ENCODE measurements at regions of chr6 and their contacts with region 1.

Region 1: DNA sequence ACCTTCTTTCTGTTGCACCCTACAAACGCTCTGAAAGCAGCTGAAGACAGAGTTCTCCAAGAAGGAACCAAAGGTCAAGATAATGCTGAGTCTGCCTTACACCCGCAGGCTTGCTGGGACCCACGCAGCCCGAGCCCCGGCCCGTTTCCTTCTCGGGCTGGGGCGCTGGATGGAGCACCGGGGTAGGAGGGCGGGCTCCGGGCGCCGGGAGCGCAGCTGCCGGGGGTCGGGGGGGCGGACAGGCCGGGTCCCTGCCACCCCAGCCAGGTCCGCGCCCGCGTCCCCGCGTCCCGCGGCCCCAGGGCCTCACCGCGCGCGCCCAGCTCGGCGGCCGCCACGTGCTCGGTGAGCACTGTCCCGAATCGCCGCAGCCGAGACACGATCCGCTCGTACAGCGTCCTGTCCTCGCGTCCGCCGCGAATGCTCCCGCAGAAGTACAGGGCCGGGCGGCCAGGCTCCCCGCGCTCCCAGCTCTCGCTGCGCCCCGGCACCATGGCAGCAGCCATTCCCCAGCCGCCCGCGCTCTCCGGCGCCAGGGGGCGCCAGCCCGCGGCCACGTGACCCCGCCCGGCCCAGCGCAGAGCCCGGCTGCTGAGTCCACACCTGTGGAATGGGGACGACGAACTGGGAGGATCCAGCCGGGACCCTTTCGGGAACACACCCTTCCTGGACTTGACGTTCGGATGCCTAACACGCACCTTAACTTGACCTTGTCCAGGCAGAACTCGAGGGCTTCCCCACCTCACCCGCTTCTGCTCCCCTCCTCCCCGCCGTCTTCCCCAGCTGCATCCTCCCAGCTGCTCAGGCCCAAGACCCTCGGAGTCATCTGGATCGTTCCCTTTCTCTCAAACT is at the start of gene DNPH1:
- DNase-seq: peak; percentile 68 to 83 (median 75)
- H3K4me3 ChIP-seq: peak within 1 kb of the TSS; percentile 62
- H3K4me3 Mint-ChIP-seq: peak within 1 kb of the TSS; percentile 85 to 93 (median 90)
- H3K27ac ChIP-seq: peak within 1 kb of the TSS; percentile 53
- H3K27ac Mint-ChIP-seq: peak within 1 kb of the TSS; percentile 85 to 97 (median 94)
- H3K4me1 ChIP-seq: peaks cover 30% of the 10 kb centered on the region
- H3K4me1 Mint-ChIP-seq: peaks cover 24 to 44% (median 39%) of the 10 kb centered on the region in 3 donors
- H3K27me3 ChIP-seq: no peaks in the 10 kb centered on the region
- H3K27me3 Mint-ChIP-seq: peaks cover 3 to 12% of the 10 kb centered on the region in 2 donors
- total RNA-seq, gene DNPH1: 68.2 to 68.3 TPM

Region 2: GRCh38 chr6:43130429-43130828 is 98.7 kb before region 1 on chr6:
- CTCF ChIA-PET with region 1: no interaction called
- POLR2A ChIA-PET with region 1: no interaction called
- DNase-seq: no peak
- H3K4me3 ChIP-seq: no peak overlapping the region
- H3K4me3 Mint-ChIP-seq: no peak overlapping the region
- H3K27ac ChIP-seq: no peak overlapping the region
- H3K27ac Mint-ChIP-seq: no peak overlapping the region
- H3K4me1 ChIP-seq: no peaks in the 10 kb centered on the region
- H3K4me1 Mint-ChIP-seq: no peaks in the 10 kb centered on the region
- H3K27me3 ChIP-seq: no peaks in the 10 kb centered on the region
- H3K27me3 Mint-ChIP-seq: peaks cover 1 to 3% of the 10 kb centered on the region in 2 donors

Region 3: DNA sequence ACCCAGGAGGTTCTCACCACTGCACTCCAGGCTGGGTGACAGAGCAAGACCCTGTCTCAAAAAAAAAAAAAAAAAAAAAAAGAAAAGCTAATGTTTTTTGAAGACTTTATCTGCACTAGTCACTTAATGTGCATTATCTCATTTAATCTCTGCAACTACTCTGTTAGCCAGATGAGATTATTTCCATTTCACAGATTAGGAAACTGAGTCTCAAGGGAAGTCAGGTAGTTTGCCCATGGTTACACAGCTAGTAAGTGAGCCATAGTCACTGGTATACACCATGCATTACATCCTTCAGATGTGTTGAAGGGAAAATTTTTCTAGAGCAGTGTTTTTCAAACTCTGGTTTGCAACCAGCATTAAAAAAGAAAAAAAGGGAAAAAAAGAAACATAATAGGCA is 65.3 kb before region 1 on chr6:
- CTCF ChIA-PET with region 1: no interaction called
- POLR2A ChIA-PET with region 1: no interaction called
- DNase-seq: no peak
- H3K4me3 ChIP-seq: no peak overlapping the region
- H3K4me3 Mint-ChIP-seq: no peak overlapping the region
- H3K27ac ChIP-seq: no peak overlapping the region
- H3K27ac Mint-ChIP-seq: no peak overlapping the region
- H3K4me1 ChIP-seq: no peaks in the 10 kb centered on the region
- H3K4me1 Mint-ChIP-seq: no peaks in the 10 kb centered on the region
- H3K27me3 ChIP-seq: no peaks in the 10 kb centered on the region
- H3K27me3 Mint-ChIP-seq: peaks cover 0 to 2% of the 10 kb centered on the region in 2 donors

Region 4: GRCh38 chr6:43174263-43175112 is 54.7 kb before region 1 on chr6:
- CTCF ChIA-PET with region 1: interaction called, 22 read pairs
- POLR2A ChIA-PET with region 1: interaction called, 6 read pairs
- DNase-seq: peak; percentile 89 to 97 (median 91)
- H3K4me3 ChIP-seq: peak overlapping the region; percentile 61
- H3K4me3 Mint-ChIP-seq: peak overlapping the region; percentile 92 to 98 (median 93)
- H3K27ac ChIP-seq: peak overlapping the region; percentile 64
- H3K27ac Mint-ChIP-seq: peak overlapping the region; percentile 91 to 98 (median 96)
- H3K4me1 ChIP-seq: peaks cover 39% of the 10 kb centered on the region
- H3K4me1 Mint-ChIP-seq: peaks cover 41 to 53% (median 44%) of the 10 kb centered on the region in 3 donors
- H3K27me3 ChIP-seq: no peaks in the 10 kb centered on the region
- H3K27me3 Mint-ChIP-seq: no peaks in the 10 kb centered on the region

Region 5: DNA sequence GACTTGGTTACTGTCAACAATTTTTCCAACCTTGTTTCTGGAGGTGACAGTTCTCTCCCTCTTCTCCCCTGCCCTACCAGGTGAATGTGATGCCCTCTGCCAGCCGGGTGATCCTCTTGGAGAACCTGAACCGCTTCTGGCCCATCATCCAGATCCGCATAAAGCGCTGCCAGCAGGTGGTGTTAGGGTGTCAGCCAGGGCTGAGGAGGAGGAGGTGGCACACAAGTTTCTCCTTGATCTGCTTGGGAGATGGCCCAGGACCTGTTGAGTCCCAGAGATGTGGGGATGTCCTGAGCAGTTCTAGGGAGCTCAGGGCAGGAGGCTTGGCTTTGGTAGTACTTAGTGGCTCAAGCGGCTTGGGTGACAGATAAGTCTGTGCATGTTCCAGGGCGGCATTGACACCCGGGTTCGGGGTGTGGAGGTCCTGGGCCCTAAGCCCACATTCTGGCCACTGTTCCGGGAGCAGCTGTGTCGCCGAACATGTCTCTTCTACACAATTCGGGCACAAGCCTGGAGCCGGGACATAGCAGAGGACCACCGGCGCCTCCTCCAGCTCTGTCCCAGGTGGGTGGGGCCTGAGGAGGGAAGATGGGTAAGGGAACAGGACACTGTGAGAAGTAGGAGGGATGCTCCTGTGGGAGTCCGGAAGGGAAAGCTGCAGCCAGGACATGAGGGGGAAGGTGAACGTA is 26.0 kb before region 1 on chr6:
- CTCF ChIA-PET with region 1: interaction called, 15 read pairs
- POLR2A ChIA-PET with region 1: no interaction called
- DNase-seq: no peak
- H3K4me3 ChIP-seq: no peak overlapping the region
- H3K4me3 Mint-ChIP-seq: no peak overlapping the region
- H3K27ac ChIP-seq: no peak overlapping the region
- H3K27ac Mint-ChIP-seq: peak overlapping the region in 1 of 8 donors; percentile 29
- H3K4me1 ChIP-seq: no peaks in the 10 kb centered on the region
- H3K4me1 Mint-ChIP-seq: no peaks in the 10 kb centered on the region
- H3K27me3 ChIP-seq: no peaks in the 10 kb centered on the region
- H3K27me3 Mint-ChIP-seq: no peaks in the 10 kb centered on the region

Region 6: GRCh38 chr6:43240950-43241349 is 11.8 kb after region 1 on chr6:
- CTCF ChIA-PET with region 1: interaction called, 17 read pairs
- POLR2A ChIA-PET with region 1: interaction called, 9 read pairs
- DNase-seq: no peak
- H3K4me3 ChIP-seq: no peak overlapping the region
- H3K4me3 Mint-ChIP-seq: no peak overlapping the region
- H3K27ac ChIP-seq: no peak overlapping the region
- H3K27ac Mint-ChIP-seq: no peak overlapping the region
- H3K4me1 ChIP-seq: no peaks in the 10 kb centered on the region
- H3K4me1 Mint-ChIP-seq: no peaks in the 10 kb centered on the region
- H3K27me3 ChIP-seq: peaks cover 35% of the 10 kb centered on the region
- H3K27me3 Mint-ChIP-seq: peaks cover 20 to 44% of the 10 kb centered on the region in 2 donors

Region 7: GRCh38 chr6:43247113-43247999 is 18.2 kb after region 1 on chr6:
- CTCF ChIA-PET with region 1: interaction called, 12 read pairs
- POLR2A ChIA-PET with region 1: interaction called, 9 read pairs
- DNase-seq: peak; percentile 66 to 85 (median 70)
- H3K4me3 ChIP-seq: peak overlapping the region; percentile 87
- H3K4me3 Mint-ChIP-seq: peak overlapping the region; percentile 86 to 93 (median 89)
- H3K27ac ChIP-seq: peak overlapping the region; percentile 35
- H3K27ac Mint-ChIP-seq: peak overlapping the region; percentile 79 to 95 (median 90)
- H3K4me1 ChIP-seq: peaks cover 12% of the 10 kb centered on the region
- H3K4me1 Mint-ChIP-seq: peaks cover 10 to 19% (median 13%) of the 10 kb centered on the region in 3 donors
- H3K27me3 ChIP-seq: peaks cover 28% of the 10 kb centered on the region
- H3K27me3 Mint-ChIP-seq: peaks cover 10 to 15% of the 10 kb centered on the region in 2 donors

Region 8: DNA sequence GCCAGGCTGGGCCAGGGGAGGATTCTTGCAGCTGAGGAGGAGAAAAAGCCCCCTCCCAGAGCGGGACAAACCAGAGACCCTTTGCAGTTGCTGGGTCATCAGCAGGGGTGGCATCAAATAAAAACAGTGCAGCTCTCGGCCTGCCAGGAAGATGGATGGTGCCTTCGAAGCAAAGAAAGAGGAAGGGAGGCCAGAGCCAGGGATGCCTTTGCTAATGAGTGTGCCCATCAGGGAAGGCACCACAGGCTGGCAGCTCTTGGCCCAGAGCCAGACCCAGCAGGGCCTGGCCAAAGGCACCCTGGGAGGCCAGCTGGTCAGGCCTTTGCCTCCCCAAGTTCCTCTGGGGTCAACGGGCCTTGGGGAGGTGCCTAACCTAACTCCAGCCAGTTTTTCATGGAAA is 166.6 kb after region 1 on chr6:
- CTCF ChIA-PET with region 1: interaction called, 26 read pairs
- POLR2A ChIA-PET with region 1: interaction called, 7 read pairs
- DNase-seq: no peak
- H3K4me3 ChIP-seq: no peak overlapping the region
- H3K4me3 Mint-ChIP-seq: no peak overlapping the region
- H3K27ac ChIP-seq: no peak overlapping the region
- H3K27ac Mint-ChIP-seq: peak overlapping the region in 1 of 8 donors; percentile 53
- H3K4me1 ChIP-seq: peaks cover 19% of the 10 kb centered on the region
- H3K4me1 Mint-ChIP-seq: peaks cover 27 to 30% (median 29%) of the 10 kb centered on the region in 3 donors
- H3K27me3 ChIP-seq: no peaks in the 10 kb centered on the region
- H3K27me3 Mint-ChIP-seq: peaks cover 0 to 10% of the 10 kb centered on the region in 2 donors

Region 9: DNA sequence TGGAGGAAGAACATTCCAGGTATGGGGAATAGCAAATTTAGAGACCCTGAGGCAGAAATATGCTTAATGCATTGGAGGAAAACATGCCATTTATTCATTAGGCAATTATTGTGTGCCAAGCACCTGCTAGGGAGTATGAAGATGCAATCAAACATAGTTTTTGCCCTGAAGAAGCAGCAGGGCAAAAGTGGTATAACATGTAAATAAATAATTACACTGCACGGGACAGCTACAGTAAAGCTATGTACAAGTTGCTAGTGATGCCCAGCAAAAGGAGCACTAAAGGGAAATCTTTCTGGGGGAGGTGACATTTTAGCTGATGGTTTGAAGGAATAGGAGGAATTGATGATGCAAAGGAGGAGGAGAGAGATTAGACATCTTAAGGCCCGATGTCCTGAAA is 247.6 kb after region 1 on chr6:
- CTCF ChIA-PET with region 1: no interaction called
- POLR2A ChIA-PET with region 1: no interaction called
- DNase-seq: peak in 1 of 5 donors; percentile 17
- H3K4me3 ChIP-seq: peak overlapping the region; percentile 65
- H3K4me3 Mint-ChIP-seq: peak overlapping the region; percentile 81 to 99 (median 88)
- H3K27ac ChIP-seq: peak overlapping the region; percentile 92
- H3K27ac Mint-ChIP-seq: peak overlapping the region; percentile 89 to 100 (median 97)
- H3K4me1 ChIP-seq: peaks cover 16% of the 10 kb centered on the region
- H3K4me1 Mint-ChIP-seq: peaks cover 36 to 49% (median 46%) of the 10 kb centered on the region in 3 donors
- H3K27me3 ChIP-seq: no peaks in the 10 kb centered on the region
- H3K27me3 Mint-ChIP-seq: no peaks in the 10 kb centered on the region

Measured in CD8-positive, alpha-beta memory T cell (primary cell).